ENCODE measurements at regions of chr19 and their contacts with region 1.

Region 1: DNA sequence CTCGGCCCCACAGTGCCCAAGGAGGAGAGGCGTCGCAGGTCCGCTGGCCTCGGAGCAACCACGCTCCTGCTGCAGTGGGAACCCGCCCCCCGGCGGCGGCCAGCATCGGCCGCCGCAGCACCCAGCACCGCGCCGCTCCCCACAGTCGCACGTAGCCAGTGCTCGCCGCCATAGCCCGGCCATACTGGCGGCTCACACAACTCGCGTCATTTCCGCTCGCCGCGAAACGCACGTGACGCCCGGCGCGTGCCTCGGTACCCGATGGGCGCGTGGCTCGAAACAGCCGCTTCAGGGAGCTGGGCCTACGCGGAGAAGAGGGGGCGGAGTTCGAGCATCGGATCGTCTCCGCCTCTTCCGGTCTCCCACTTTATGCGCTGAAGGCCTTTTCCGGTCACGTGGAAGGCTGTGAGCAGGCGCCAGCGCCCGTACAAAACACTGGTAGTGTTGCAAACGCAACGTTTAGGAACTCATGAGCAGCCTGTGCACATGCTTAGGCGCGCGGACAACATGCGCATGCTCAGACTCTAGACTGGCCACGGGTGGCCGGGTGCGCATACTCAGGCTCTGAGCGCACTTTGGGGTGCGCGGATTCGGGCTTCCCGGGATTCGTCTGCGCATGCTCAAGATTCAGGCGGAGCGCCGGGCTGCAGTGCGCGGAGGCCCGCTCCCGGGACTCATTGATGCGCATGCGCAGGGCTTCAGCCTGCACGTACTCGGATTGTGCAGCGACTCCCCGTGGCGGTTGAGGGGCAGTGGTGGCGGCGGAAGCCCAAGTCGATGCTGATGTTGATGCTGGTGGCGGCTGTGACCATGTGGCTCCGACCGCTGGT is at the starts of genes CATSPERD and LONP1:
- DNase-seq: peak; percentile 94
- ATAC-seq: peak; percentile 87
- H3K4me3 Mint-ChIP-seq: peak within 1 kb of the TSS; percentile 89
- H3K27ac Mint-ChIP-seq: peak within 1 kb of the TSS; percentile 93
- H3K4me1 Mint-ChIP-seq: peaks cover 27% of the 10 kb centered on the region
- H3K27me3 Mint-ChIP-seq: peaks cover 4% of the 10 kb centered on the region
- CTCF ChIP-seq: no peak
- total RNA-seq, gene CATSPERD: not detected in 2 replicates
- total RNA-seq, gene LONP1: 72.9 and 77.5 TPM in 2 replicates

Region 2: GRCh38 chr19:5585461-5586299 is 134.5 kb before region 1 on chr19:
- CTCF ChIA-PET with region 1: no interaction called
- POLR2A ChIA-PET with region 1: no interaction called
- intact Hi-C with region 1: no loop called
- DNase-seq: no peak
- ATAC-seq: peak; percentile 68
- H3K4me3 Mint-ChIP-seq: no peak overlapping the region
- H3K27ac Mint-ChIP-seq: peak overlapping the region; percentile 63
- H3K4me1 Mint-ChIP-seq: peaks cover 12% of the 10 kb centered on the region
- H3K27me3 Mint-ChIP-seq: no peaks in the 10 kb centered on the region
- CTCF ChIP-seq: no peak

Region 3: DNA sequence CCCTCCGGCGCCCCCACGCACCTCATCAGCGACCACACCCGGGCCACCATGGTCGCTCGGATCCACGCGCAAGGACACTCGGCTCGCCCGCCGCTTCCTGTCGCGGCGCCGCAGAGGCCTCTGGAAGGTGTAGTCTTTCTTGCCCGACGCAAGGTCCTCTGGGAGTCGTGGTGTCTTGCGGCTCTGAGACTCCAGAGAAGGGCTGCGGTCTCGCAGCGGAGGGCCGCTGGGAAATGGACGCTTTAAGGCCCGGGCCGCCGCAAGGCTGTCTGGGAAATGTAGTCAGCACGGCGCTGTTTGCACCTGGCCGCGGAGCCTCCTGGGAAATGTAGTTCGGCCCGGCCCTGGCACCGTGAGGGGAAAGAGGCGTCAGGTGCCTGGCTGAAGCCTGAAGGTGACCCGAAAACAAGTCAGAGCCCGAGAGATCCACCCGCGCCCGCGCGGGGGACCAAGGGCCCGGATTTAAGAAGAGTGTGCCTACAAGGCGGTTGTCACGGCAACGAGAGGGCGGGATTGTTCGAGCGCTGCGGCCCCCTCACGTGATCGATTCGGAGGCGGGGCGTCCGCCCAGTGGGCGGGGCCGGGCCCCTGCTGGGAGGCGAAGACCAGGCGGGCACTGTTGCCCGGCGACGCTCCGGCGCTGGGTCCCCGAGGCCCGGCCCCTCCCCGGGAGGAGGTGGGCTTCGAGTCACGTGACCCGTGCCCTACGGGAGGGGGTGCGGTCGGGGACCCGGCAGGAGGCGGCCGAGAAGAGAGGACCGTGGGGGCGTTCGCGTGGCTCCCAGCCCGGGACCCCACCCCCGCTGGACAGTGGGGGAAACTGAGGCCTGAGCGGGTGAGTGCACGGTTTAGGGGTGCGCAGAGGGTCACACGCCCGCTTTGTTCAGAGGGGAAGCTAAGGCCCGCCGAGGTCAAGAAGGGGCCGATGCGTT is 39.5 kb before region 1 on chr19 and contains the starts of genes HSD11B1L and MICOS13:
- CTCF ChIA-PET with region 1: no interaction called
- POLR2A ChIA-PET with region 1: no interaction called
- intact Hi-C with region 1: loop called (anchors 1 kb)
- DNase-seq: peak; percentile 100
- ATAC-seq: peak; percentile 92
- H3K4me3 Mint-ChIP-seq: peak within 1 kb of the TSS; percentile 96
- H3K27ac Mint-ChIP-seq: peak within 1 kb of the TSS; percentile 100
- H3K4me1 Mint-ChIP-seq: peaks cover 28% of the 10 kb centered on the region
- H3K27me3 Mint-ChIP-seq: peaks cover 2% of the 10 kb centered on the region
- CTCF ChIP-seq: no peak
- total RNA-seq, gene HSD11B1L: 1.4 and 1.5 TPM in 2 replicates
- total RNA-seq, gene MICOS13: 58.0 and 60.8 TPM in 2 replicates

Region 4: GRCh38 chr19:5690125-5690954 is 29.8 kb before region 1 on chr19 and contains the start of gene RPL36:
- CTCF ChIA-PET with region 1: interaction called, 5 read pairs
- POLR2A ChIA-PET with region 1: interaction called, 102 read pairs
- intact Hi-C with region 1: loop called (anchors 1 kb)
- DNase-seq: peak; percentile 99
- ATAC-seq: peak; percentile 48
- H3K4me3 Mint-ChIP-seq: peak within 1 kb of the TSS; percentile 93
- H3K27ac Mint-ChIP-seq: peak within 1 kb of the TSS; percentile 90
- H3K4me1 Mint-ChIP-seq: peaks cover 33% of the 10 kb centered on the region
- H3K27me3 Mint-ChIP-seq: no peaks in the 10 kb centered on the region
- CTCF ChIP-seq: peak; percentile 88
- total RNA-seq, gene RPL36: 1,170 and 1,330 TPM in 2 replicates

Region 5: GRCh38 chr19:5707576-5708575 is 12.3 kb before region 1 on chr19:
- CTCF ChIA-PET with region 1: no interaction called
- POLR2A ChIA-PET with region 1: interaction called, 11 read pairs
- intact Hi-C with region 1: no loop called
- DNase-seq: no peak
- ATAC-seq: no peak
- H3K4me3 Mint-ChIP-seq: no peak overlapping the region
- H3K27ac Mint-ChIP-seq: no peak overlapping the region
- H3K4me1 Mint-ChIP-seq: no peaks in the 10 kb centered on the region
- H3K27me3 Mint-ChIP-seq: no peaks in the 10 kb centered on the region
- CTCF ChIP-seq: no peak

Region 6: DNA sequence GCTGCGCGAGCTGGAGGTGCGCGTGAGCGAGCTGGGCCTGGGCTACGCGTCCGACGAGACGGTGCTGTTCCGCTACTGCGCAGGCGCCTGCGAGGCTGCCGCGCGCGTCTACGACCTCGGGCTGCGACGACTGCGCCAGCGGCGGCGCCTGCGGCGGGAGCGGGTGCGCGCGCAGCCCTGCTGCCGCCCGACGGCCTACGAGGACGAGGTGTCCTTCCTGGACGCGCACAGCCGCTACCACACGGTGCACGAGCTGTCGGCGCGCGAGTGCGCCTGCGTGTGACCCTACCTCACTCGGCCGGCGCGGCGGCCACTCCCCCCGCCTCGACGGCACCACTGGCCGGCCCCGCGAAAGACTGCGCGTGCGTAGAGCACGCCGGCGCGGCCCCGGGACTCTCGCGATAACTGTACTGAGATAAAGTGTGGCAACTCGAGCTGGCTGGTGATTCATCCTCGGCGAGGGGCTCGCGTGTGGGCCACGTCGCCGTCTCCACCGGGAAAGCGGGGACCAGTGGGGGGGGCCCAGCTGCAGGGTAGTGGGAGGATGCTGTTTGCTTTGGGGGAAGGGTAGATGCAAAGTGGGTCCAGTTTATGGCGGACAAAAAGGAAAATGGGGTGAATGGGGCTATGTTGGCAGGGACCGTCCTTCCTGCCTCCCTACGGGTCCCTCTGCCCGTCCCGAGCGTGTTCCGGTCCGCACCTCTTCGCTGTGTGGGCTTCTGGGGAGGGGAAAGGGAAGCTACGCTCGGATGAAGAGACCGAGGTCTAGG is 107.9 kb after region 1 on chr19:
- CTCF ChIA-PET with region 1: no interaction called
- POLR2A ChIA-PET with region 1: interaction called, 9 read pairs
- intact Hi-C with region 1: loop called (anchors 1 kb)
- DNase-seq: peak; percentile 78
- ATAC-seq: peak; percentile 78
- H3K4me3 Mint-ChIP-seq: peak overlapping the region; percentile 85
- H3K27ac Mint-ChIP-seq: peak overlapping the region; percentile 75
- H3K4me1 Mint-ChIP-seq: peaks cover 18% of the 10 kb centered on the region
- H3K27me3 Mint-ChIP-seq: peaks cover 11% of the 10 kb centered on the region
- CTCF ChIP-seq: no peak

Region 7: GRCh38 chr19:5904352-5905113 is 184.4 kb after region 1 on chr19 and contains the start of gene VMAC:
- CTCF ChIA-PET with region 1: no interaction called
- POLR2A ChIA-PET with region 1: interaction called, 12 read pairs
- intact Hi-C with region 1: loop called (anchors 1 kb)
- DNase-seq: peak; percentile 100
- ATAC-seq: peak; percentile 78
- H3K4me3 Mint-ChIP-seq: peak within 1 kb of the TSS; percentile 95
- H3K27ac Mint-ChIP-seq: peak within 1 kb of the TSS; percentile 98
- H3K4me1 Mint-ChIP-seq: peaks cover 38% of the 10 kb centered on the region
- H3K27me3 Mint-ChIP-seq: no peaks in the 10 kb centered on the region
- CTCF ChIP-seq: no peak
- total RNA-seq, gene VMAC: 11.2 and 13.3 TPM in 2 replicates

Region 8: DNA sequence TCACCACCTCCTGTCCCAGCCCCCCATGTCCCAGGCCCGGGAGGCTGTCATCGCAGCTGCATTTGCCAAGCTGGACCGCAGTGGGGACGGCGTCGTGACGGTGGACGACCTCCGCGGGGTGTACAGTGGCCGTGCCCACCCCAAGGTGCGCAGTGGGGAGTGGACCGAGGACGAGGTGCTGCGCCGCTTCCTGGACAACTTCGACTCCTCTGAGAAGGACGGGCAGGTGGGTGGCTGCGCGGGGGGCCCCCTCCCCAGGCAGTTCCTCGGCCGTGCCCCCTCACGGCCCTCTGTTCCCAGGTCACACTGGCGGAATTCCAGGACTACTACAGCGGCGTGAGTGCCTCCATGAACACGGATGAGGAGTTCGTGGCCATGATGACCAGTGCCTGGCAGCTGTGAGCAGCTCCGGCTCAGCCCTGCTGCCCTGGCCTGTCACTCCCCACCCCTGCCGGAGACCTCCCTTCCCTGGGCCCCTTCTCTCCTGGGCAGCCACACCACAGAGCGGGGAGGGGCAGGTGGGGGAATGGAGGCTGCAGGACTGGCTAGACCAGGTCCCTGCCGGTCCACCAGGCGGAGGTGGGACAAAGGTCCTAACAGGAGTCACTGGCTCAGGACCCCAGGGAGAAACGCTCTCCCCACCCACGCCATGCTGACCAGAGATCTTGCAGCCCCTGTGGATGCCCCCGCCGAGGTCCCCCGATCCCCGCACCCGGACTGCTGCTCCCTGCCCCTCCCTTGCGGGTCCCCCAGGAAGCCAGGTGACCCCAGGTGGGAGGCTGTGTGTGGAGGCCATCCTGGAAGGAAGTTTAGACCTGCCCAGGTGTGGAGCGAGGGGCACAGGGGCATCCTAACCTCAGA is 195.0 kb after region 1 on chr19:
- CTCF ChIA-PET with region 1: no interaction called
- POLR2A ChIA-PET with region 1: no interaction called
- intact Hi-C with region 1: no loop called
- DNase-seq: no peak
- ATAC-seq: no peak
- H3K4me3 Mint-ChIP-seq: no peak overlapping the region
- H3K27ac Mint-ChIP-seq: no peak overlapping the region
- H3K4me1 Mint-ChIP-seq: no peaks in the 10 kb centered on the region
- H3K27me3 Mint-ChIP-seq: no peaks in the 10 kb centered on the region
- CTCF ChIP-seq: no peak

Region 9: DNA sequence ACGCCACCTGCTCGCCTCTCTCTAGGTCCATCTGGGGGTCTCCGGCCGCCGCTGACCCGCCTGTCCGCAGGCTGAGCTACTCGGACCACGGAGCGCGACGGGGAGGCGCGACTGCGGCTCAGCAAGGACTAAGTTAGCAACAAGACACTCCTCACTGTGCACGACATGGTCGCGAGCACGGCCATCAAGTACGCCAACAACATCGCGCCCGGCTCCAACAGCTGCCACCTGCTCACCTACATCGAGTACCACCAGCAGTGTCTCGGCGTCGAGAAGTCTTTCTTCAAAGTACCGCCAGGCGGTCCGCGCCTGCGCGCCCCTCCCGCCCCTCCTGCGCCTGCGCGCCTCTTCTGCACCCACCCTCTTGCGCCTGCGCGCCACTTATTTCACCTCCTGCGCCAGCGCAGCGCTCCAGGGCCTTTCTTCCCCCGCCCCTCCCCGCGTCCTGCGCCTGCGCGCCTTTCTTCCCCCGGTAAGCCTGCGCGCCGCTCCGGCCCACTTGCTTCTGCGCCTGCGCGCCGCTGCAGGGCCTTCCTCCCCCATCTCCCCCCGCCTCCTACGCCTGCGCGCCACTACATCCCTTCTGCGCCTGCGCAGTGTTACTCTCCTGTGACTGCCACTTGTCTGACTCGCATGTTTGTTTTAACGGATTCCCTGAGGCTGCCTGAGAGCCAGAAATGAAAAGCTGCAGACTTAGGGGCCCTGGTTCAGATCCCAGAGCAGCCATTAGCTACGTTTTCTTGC is 479.2 kb after region 1 on chr19:
- CTCF ChIA-PET with region 1: no interaction called
- POLR2A ChIA-PET with region 1: no interaction called
- intact Hi-C with region 1: no loop called
- DNase-seq: peak; percentile 99
- ATAC-seq: peak; percentile 86
- H3K4me3 Mint-ChIP-seq: peak overlapping the region; percentile 95
- H3K27ac Mint-ChIP-seq: peak overlapping the region; percentile 85
- H3K4me1 Mint-ChIP-seq: peaks cover 33% of the 10 kb centered on the region
- H3K27me3 Mint-ChIP-seq: no peaks in the 10 kb centered on the region
- CTCF ChIP-seq: no peak